Activated B cell treated with CpG ODN at 0.5 μM for 24 hours (primary cell): ENCODE measurements at regions of chr15 and their contacts with region 1.

Region 1: GRCh38 chr15:45198337-45199135 is 10.8 kb upstream of the SHF start:
- DNase-seq: peak; percentile 88
- ATAC-seq: peak; percentile 66
- H3K4me3 Mint-ChIP-seq: no peak overlapping the region
- H3K27ac Mint-ChIP-seq: no peak overlapping the region
- H3K4me1 Mint-ChIP-seq: peaks cover 10% of the 10 kb centered on the region
- H3K27me3 Mint-ChIP-seq: no peaks in the 10 kb centered on the region
- CTCF ChIP-seq: no peak

Region 2: DNA sequence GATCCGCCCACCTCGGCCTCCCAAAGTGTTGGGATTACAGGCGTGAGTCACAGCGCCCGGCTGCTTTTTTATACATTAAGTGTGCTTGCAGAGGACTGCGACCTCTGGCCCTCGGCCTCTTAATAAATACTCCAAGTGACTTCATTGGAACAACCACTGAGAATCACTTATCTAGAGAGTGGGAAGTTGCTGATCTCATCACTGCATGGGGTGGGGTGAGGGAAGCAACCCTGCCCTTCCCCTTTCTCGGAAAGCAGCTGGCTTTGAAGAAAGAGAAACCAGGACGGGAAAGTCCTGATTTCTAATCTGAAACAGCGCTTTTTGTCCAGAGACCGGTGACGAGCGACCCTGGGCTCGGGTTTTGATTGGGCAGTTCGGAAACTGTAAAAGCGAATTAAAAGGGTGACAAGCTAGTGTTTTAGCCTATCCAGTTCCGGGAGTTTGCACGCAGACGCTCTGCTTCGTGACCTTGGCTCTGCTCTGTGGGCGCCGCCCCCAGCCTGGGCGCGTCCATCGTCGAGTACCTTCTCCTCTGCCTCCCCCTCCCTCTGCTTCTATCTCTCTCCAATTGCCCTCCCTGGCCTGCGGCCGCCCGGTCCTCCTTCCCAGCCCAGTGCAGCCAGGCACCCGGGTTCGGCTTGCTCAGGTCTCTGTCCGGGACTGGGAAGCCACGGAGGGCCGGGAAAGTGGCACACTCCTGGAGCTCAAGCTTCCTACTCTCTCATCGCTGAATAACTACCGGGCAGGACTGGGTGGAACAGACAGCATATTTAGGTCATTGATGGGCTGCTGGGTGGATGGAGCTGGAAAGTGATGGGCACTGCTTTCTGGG is 469.7 kb before region 1 on chr15:
- CTCF ChIA-PET with region 1: no interaction called
- POLR2A ChIA-PET with region 1: interaction called, 8 read pairs
- intact Hi-C with region 1: loop called (anchors 5 kb)
- DNase-seq: peak; percentile 86
- ATAC-seq: peak; percentile 74
- H3K4me3 Mint-ChIP-seq: peak overlapping the region; percentile 99
- H3K27ac Mint-ChIP-seq: peak overlapping the region; percentile 100
- H3K4me1 Mint-ChIP-seq: peaks cover 75% of the 10 kb centered on the region
- H3K27me3 Mint-ChIP-seq: no peaks in the 10 kb centered on the region
- CTCF ChIP-seq: no peak

Region 3: GRCh38 chr15:45118131-45118588 is 80.4 kb before region 1 on chr15:
- CTCF ChIA-PET with region 1: interaction called, 3 read pairs
- POLR2A ChIA-PET with region 1: interaction called, 7 read pairs
- intact Hi-C with region 1: loop called (anchors 2 kb)
- DNase-seq: peak; percentile 71
- ATAC-seq: peak; percentile 99
- H3K4me3 Mint-ChIP-seq: peak overlapping the region; percentile 81
- H3K27ac Mint-ChIP-seq: no peak overlapping the region
- H3K4me1 Mint-ChIP-seq: peaks cover 42% of the 10 kb centered on the region
- H3K27me3 Mint-ChIP-seq: peaks cover 76% of the 10 kb centered on the region
- CTCF ChIP-seq: peak; percentile 96

Region 4: DNA sequence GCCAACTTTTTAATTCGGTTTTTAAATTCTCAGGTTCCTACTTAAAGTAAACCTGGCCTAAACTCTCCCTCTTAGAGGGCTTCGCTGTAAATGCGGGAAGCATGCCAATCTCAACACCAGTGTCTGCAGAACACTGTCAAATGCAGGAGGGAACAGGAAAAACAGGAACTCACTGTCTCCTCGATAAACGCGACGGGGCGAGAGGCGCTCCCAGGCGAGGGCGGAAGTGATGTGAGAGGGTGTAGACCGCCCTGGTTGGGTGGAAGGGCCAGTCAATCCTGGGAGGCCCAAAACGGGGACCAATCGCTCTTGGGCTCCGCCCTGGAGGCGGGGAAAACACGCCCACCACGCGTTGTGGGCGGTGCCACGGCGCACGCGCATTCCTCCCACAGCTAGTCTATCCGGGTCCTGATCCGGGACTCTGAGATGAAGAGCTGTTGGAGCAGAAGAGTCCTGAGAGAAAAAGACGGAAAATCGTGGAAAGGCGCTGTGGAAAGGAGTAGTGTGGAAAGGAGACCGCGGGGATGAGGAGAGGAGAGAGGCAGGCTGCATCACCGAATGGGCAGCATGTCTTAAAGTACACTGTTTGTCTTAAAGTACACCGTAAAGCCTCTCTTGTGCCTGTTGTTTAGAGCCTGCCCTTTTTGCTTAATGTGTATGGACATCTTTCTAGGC is 80.6 kb after region 1 on chr15:
- CTCF ChIA-PET with region 1: interaction called, 4 read pairs
- POLR2A ChIA-PET with region 1: interaction called, 12 read pairs
- intact Hi-C with region 1: loop called (anchors 1 kb)
- DNase-seq: peak; percentile 99
- ATAC-seq: peak; percentile 99
- H3K4me3 Mint-ChIP-seq: peak overlapping the region; percentile 93
- H3K27ac Mint-ChIP-seq: peak overlapping the region; percentile 89
- H3K4me1 Mint-ChIP-seq: peaks cover 14% of the 10 kb centered on the region
- H3K27me3 Mint-ChIP-seq: no peaks in the 10 kb centered on the region
- CTCF ChIP-seq: no peak

Region 5: DNA sequence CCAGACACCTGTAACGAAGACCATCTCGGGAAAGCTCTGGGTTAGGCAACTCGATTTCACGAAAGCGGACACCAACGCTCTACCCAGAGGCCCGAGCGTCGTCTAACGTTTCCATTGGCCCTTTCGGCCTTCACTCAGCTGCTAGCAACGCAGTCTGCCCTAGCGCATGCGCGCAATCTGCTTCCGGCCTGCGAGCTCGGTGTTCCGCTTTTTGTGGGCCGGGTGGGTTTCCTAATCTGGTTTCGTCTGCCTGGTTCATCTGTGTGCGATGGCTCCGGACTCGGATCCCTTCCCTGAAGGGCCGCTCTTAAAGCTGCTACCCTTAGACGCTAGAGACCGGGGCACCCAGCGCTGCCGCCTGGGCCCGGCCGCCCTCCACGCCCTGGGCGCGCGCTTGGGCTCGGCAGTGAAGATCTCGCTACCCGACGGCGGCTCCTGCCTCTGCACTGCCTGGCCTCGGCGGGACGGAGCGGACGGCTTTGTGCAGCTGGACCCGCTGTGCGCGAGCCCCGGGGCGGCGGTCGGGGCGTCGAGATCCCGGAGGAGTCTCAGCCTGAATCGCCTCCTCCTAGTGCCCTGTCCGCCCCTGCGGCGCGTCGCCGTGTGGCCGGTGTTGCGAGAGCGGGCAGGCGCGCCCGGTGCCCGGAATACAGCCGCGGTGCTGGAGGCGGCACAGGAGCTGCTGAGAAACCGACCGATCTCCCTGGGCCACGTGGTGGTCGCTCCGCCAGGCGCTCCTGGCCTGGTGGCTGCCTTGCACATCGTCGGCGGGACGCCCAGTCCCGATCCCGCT is 203.8 kb after region 1 on chr15:
- CTCF ChIA-PET with region 1: interaction called, 15 read pairs
- POLR2A ChIA-PET with region 1: interaction called, 53 read pairs
- intact Hi-C with region 1: loop called (anchors 1 kb)
- DNase-seq: peak; percentile 90
- ATAC-seq: peak; percentile 92
- H3K4me3 Mint-ChIP-seq: peak overlapping the region; percentile 95
- H3K27ac Mint-ChIP-seq: peak overlapping the region; percentile 91
- H3K4me1 Mint-ChIP-seq: peaks cover 33% of the 10 kb centered on the region
- H3K27me3 Mint-ChIP-seq: no peaks in the 10 kb centered on the region
- CTCF ChIP-seq: no peak

Region 6: GRCh38 chr15:45634442-45635190 is 436.1 kb after region 1 on chr15 and contains the start of gene SQOR:
- CTCF ChIA-PET with region 1: no interaction called
- POLR2A ChIA-PET with region 1: interaction called, 4 read pairs
- intact Hi-C with region 1: loop called (anchors 2 kb)
- DNase-seq: no peak
- ATAC-seq: peak; percentile 78
- H3K4me3 Mint-ChIP-seq: peak within 1 kb of the TSS; percentile 96
- H3K27ac Mint-ChIP-seq: peak within 1 kb of the TSS; percentile 94
- H3K4me1 Mint-ChIP-seq: peaks cover 33% of the 10 kb centered on the region
- H3K27me3 Mint-ChIP-seq: no peaks in the 10 kb centered on the region
- CTCF ChIP-seq: no peak
- total RNA-seq, gene SQOR: 39.2 and 44.9 TPM in 2 replicates